Cardiac septum (tissue), 1 donor: ENCODE measurements at regions of chr17 and their contacts with region 1.

Region 1: GRCh38 chr17:39153599-39154051 is 2.2 kb upstream of the PLXDC1 start:
- DNase-seq: peak; percentile 95

Region 2: DNA sequence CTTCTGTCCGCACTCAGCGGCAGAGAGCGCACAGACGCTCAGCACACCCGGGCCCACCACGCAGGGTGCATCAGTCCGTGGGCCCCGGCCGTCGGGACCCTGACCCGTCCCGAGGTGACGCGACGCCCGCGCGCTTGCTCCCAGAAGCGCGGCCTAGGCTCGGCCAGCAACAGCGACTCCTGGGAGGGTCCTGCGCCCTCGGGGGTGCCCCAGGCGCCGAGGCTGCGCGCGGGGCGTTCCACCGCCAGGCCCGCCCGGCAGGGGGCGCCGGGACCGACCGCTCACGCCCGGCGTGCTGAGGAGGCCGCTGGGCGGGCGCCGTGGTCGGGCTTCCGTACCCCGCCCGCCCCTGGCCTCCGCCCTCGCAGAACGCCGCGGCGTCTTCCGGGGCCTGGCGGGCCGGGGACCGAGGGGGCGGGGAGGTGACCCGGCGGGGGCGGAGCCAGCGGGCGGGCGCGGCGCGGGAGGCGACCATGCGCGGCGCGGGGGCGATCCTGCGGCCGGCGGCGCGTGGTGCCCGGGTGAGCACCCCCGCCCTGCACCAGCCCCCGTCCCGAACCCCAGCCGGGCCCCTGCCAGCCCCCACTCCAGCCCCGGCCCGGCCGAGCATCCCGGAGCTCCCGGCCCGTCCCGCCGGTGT is 423.6 kb before region 1 on chr17 and contains the start of gene CISD3:
- intact Hi-C with region 1: loop called (anchors 10 kb)
- DNase-seq: peak; percentile 94
- total RNA-seq, gene CISD3: 67.1 TPM

Region 3: DNA sequence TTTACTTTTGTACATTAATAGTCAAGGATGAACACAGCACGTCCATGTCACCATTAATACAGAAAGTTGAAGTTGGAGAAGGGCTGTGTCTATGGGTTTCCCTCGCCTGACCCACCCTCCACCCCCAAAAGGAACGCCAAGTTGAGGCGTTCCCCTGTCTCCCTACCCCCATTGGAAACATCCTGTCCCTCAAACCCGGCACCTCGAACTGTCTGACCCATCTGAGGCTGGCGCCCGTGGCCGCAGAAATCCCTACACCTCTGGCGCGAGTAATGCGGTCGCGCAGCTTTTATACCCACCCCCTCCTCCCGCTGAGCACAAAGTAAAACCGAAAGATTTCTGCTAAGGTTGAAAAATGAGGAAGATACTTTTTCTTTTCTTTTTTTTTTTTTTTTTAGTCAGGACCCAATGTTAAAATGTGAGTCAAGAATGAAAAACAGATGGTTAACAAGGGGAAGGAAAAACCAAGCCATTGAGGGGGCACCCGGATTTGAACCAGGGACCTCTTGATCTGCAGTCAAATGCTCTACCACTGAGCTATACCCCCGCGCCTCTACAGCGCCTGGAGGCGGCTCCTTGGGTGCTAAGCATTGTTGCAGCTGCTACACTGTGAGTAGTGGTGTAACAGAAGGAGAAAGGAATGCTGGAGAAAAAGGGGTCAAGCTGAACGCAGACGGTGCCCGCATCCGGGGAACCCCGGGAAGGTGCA is 284.7 kb before region 1 on chr17:
- intact Hi-C with region 1: loop called (anchors 5 kb)
- DNase-seq: peak; percentile 92

Region 4: GRCh38 chr17:38967290-38967738 is 186.3 kb before region 1 on chr17 and contains the start of gene FBXO47:
- intact Hi-C with region 1: loop called (anchors 5 kb)
- DNase-seq: peak; percentile 95
- total RNA-seq, gene FBXO47: not detected

Region 5: GRCh38 chr17:38982858-38983746 is 170.5 kb before region 1 on chr17:
- intact Hi-C with region 1: loop called (anchors 1 kb)
- DNase-seq: no peak

Region 6: GRCh38 chr17:39001703-39002637 is 151.7 kb before region 1 on chr17:
- intact Hi-C with region 1: loop called (anchors 5 kb)
- DNase-seq: peak; percentile 91

Region 7: DNA sequence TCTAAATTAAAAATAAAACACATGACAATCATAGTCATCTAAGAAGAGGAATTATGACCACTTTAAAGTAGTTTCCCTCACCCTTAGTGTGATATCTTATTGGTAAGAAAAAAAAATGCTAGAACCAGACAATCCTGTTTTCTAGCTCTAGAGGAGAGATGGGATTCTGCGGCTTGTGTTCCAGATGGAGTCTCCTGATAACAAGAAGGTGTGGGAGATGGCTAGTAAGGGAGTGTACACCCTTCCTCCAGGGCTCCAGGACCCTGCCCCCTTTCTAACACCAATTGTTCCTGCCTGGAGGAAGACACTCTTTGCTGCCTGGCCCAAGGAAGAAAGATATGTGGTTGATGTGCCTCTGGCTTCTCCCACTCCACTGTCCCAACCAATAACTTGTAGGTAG is 117.6 kb before region 1 on chr17:
- intact Hi-C with region 1: no loop called
- DNase-seq: no peak

Region 8: GRCh38 chr17:39057701-39058206 is 95.9 kb before region 1 on chr17:
- intact Hi-C with region 1: loop called (anchors 2 kb)
- DNase-seq: peak; percentile 68

Region 9: GRCh38 chr17:39174907-39175694 is 21.5 kb after region 1 on chr17:
- intact Hi-C with region 1: no loop called
- DNase-seq: no peak

Region 10: GRCh38 chr17:39294060-39294459 is 140.4 kb after region 1 on chr17:
- intact Hi-C with region 1: no loop called
- DNase-seq: no peak

Region 11: GRCh38 chr17:39517224-39517623 is 363.6 kb after region 1 on chr17:
- intact Hi-C with region 1: no loop called
- DNase-seq: no peak